HepG2 (cell line): ENCODE measurements at regions of chr15 and their contacts with region 1.

Region 1: DNA sequence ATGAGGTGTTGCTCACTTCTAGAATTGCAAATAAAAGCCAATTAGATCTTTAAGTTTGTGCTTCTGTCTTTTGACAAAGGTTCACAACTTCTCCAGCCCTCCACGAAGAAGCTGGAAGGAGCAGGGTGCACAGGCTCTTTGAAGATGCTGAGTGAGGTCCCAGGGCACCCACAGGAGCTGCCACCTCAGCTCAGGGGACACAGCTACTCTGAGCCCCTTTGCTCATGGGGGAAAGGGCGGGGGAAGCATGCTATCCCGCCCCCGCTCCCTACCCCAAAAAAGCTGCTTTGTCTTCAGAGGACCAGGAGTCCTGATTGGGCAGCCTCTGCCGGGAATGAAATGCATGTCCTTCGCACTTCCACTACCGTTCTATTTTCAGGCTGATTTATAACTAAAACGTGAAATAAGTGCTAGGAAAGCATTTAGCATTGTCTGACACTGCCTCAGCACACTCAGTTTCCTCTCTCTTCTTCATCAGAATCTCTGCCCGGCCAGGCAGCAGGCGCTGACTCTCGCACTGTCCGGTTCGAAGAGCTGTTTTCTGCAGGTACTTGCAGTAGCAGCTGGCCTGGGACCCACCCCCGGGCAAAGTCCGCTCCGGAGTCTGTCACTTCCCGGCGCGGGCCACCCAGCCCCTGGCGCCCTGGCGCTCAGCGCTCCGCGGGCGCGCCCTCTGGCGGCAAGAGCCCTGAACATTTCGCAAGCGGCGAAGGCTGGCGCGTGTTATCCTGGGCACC is 45.5 kb upstream of the KLHL25 start:
- DNase-seq: peak; percentile 85
- ATAC-seq: peak; percentile 96
- H3K4me3 ChIP-seq: peak overlapping the region; percentile 24 to 52 (median 41)
- H3K27ac ChIP-seq: no peak overlapping the region
- H3K4me1 ChIP-seq: peaks cover 41% of the 10 kb centered on the region
- H3K27me3 ChIP-seq: peaks cover 0 to 2% of the 10 kb centered on the region in 2 experiments; a peak in 2 of 5 replicates
- CTCF ChIP-seq: peak; percentile 97
- EP300 ChIP-seq: peak in 1 of 2 experiments; percentile 60; a peak in 2 of 4 replicates
- POLR2A ChIP-seq: 0 out of 4 replicates have a peak, but pooled peaks of 1 of the 2 experiments have one; percentile 21
- RAD21 ChIP-seq: peak; percentile 97

Region 2: DNA sequence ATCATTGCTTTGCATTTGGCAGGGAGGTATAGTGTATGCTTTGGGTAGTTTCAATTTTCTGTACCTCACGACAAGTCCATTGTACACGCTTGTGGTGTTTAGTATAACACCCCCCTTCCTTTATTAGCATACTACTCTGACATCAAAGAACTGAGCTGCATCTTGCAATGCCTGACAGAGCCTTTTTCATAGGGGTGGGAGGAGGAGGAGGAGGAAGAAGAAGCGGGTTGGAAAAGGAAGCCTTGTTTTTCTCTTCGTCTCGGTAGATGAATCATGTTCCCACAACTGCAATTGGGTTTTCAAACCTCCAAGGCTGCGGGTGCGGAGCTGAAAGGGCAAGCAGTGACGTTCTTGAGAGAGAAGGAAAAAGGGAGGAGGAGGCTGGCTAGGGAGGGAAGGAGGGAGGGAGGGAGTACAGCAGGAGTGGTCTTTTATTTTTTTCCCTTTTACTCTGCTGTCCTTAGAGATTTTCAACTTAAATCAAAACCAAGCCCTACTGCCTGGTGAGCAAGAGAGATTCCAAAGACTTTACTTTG is 221.2 kb before region 1 on chr15:
- CTCF ChIA-PET with region 1: no interaction called
- POLR2A ChIA-PET with region 1: no interaction called
- in situ Hi-C with region 1: loop called (anchors 25 kb)
- intact Hi-C with region 1: loop called (anchors 10 kb)
- DNase-seq: no peak
- ATAC-seq: no peak
- H3K4me3 ChIP-seq: no peak overlapping the region
- H3K27ac ChIP-seq: no peak overlapping the region
- H3K4me1 ChIP-seq: peaks cover 22% of the 10 kb centered on the region
- H3K27me3 ChIP-seq: no peaks in the 10 kb centered on the region
- CTCF ChIP-seq: no peak
- EP300 ChIP-seq: no peak
- POLR2A ChIP-seq: no peak
- RAD21 ChIP-seq: no peak

Region 3: GRCh38 chr15:85730001-85730820 is 110.0 kb before region 1 on chr15:
- CTCF ChIA-PET with region 1: interaction called, 14 read pairs
- POLR2A ChIA-PET with region 1: no interaction called
- in situ Hi-C with region 1: no loop called
- intact Hi-C with region 1: loop called (anchors 1 kb)
- DNase-seq: peak; percentile 53
- ATAC-seq: peak; percentile 86
- H3K4me3 ChIP-seq: no peak overlapping the region
- H3K27ac ChIP-seq: no peak overlapping the region
- H3K4me1 ChIP-seq: no peaks in the 10 kb centered on the region
- H3K27me3 ChIP-seq: no peaks in the 10 kb centered on the region
- CTCF ChIP-seq: peak; percentile 83
- EP300 ChIP-seq: no peak
- POLR2A ChIP-seq: no peak
- RAD21 ChIP-seq: peak; percentile 68

Region 4: DNA sequence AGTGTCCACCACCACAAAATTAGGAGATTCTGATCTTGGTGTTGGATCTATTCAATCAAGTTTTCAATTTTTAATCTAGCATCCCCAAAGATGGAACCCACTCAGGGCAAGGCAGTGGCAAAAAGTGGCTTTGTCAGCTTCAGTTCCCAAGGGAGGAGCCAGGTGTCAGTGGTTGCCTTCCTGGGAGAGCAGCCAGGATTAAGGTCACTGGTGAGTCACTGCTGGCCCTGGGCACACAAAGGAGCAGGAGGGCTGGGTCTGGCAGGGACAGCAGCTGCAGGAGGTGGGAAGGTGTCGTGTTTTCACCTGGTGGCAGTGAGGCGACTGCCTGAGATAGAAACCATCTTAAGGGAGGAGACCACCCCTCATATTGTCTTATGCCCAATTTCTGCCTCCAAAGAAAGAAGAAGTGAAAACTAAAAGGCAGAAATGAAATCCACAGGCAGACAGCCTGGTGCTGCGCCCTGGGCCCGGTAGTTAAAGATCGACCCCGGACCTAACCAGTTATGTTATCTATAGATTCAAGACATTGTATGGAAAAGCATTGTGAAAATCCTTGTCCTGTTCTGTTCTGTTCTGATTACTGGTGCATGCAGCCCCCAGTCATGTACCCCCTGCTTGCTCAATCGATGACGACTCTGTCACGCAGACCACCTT is 39.6 kb before region 1 on chr15:
- CTCF ChIA-PET with region 1: interaction called, 4 read pairs
- POLR2A ChIA-PET with region 1: interaction called, 3 read pairs
- in situ Hi-C with region 1: no loop called
- intact Hi-C with region 1: loop called (anchors 1 kb)
- DNase-seq: peak; percentile 78
- ATAC-seq: peak; percentile 98
- H3K4me3 ChIP-seq: no peak overlapping the region
- H3K27ac ChIP-seq: no peak overlapping the region
- H3K4me1 ChIP-seq: peaks cover 15% of the 10 kb centered on the region
- H3K27me3 ChIP-seq: no peaks in the 10 kb centered on the region; a peak in 1 of 5 replicates
- CTCF ChIP-seq: peak; percentile 77
- EP300 ChIP-seq: no peak
- POLR2A ChIP-seq: no peak
- RAD21 ChIP-seq: peak; percentile 60; the same call in 1 of the 2 replicates

Region 5: DNA sequence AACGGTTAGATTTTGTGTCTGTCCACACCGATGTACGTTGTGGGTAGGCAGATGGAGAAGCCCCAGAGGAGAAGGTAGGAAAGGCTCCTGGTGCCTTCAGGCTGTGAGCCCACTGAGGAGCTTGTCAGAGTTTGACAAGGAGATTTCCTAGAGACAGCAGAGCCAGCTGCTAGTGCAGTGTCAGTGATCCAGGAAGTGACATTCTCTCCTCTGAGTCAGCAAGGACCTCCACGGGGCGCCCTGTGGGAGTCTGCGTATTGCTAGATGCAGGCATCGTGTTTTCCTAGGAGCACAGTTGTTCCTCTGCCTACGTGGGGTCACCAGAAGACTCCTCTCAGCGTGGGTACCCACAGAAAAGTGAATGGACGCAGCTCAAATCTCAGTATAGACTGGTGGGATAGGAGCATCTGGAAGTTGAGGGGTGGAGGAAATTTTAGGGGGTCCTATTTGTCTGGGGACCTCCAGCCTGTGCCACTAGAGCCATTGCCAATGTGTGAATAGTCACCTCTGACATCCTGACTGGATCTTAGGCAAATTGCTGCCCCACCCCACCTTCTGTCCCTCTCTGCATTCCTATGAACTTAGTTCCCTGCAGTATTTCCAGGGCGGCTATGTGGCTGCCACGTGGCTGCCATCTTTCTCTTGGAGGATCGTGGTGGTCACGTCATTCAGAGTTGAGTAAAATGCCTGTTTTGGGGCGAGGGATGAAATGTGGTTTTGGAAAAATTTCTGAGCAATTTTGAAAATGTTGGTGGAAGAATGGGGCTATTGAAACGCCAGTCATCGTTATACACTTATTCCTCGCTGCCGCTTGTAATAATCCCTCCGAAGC is 39.3 kb after region 1 on chr15:
- CTCF ChIA-PET with region 1: no interaction called
- POLR2A ChIA-PET with region 1: no interaction called
- in situ Hi-C with region 1: no loop called
- intact Hi-C with region 1: no loop called
- DNase-seq: no peak
- ATAC-seq: no peak
- H3K4me3 ChIP-seq: no peak overlapping the region
- H3K27ac ChIP-seq: no peak overlapping the region
- H3K4me1 ChIP-seq: no peaks in the 10 kb centered on the region
- H3K27me3 ChIP-seq: peaks cover 1 to 10% of the 10 kb centered on the region in 2 experiments; a peak in 3 of 5 replicates
- CTCF ChIP-seq: no peak
- EP300 ChIP-seq: no peak
- POLR2A ChIP-seq: no peak
- RAD21 ChIP-seq: no peak